Heart left ventricle (tissue), 16 donors: ENCODE measurements at regions of chr15 and their contacts with region 1.

Region 1: GRCh38 chr15:90419738-90420406 is 31.8 kb downstream of the IQGAP1 start:
- DNase-seq: no peak
- ATAC-seq: peak; percentile 37 to 69 (median 56)
- H3K4me3 ChIP-seq: peak overlapping the region in 1 of 12 donors; percentile 12
- H3K27ac ChIP-seq: peak overlapping the region in 10 of 12 donors; percentile 12 to 79 (median 33)
- H3K4me1 ChIP-seq: peaks cover 18 to 86% (median 71%) of the 10 kb centered on the region in 12 donors
- H3K27me3 ChIP-seq: no peaks in the 10 kb centered on the region
- CTCF ChIP-seq: no peak
- POLR2A ChIP-seq: no peak

Region 2: GRCh38 chr15:90362936-90363212 is 57.0 kb before region 1 on chr15:
- intact Hi-C with region 1: loop called in 1 of 10 experiments (anchors 10 kb)
- DNase-seq: no peak
- ATAC-seq: peak in 3 of 4 donors; percentile 41 to 78 (median 57)
- H3K4me3 ChIP-seq: no peak overlapping the region
- H3K27ac ChIP-seq: peak overlapping the region in 10 of 12 donors; percentile 45 to 88 (median 74)
- H3K4me1 ChIP-seq: peaks cover 0 to 48% (median 16%) of the 10 kb centered on the region in 12 donors
- H3K27me3 ChIP-seq: no peaks in the 10 kb centered on the region
- CTCF ChIP-seq: no peak
- POLR2A ChIP-seq: no peak

Region 3: DNA sequence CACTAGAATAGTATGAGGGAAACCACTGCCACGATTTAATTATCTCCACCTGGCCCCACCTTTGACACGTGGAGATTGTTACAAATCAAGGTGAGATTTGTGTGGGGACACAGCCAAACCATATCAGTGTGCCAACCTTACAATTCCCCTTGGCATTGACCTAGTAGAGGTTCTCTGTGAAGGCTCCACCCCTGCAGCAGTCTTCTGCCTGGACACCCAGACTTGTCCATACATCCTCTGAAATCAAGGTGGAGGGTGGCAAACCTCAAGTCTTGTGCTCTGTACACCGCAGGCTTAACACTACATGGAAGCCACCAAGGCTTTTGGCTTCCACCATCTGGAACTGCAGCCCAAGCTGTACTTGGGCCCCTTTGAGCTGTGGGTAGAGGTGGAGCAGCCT is 40.6 kb before region 1 on chr15:
- intact Hi-C with region 1: no loop called
- DNase-seq: no peak
- ATAC-seq: no peak
- H3K4me3 ChIP-seq: no peak overlapping the region
- H3K27ac ChIP-seq: no peak overlapping the region
- H3K4me1 ChIP-seq: peaks cover 0 to 20% (median 6%) of the 10 kb centered on the region in 12 donors
- H3K27me3 ChIP-seq: no peaks in the 10 kb centered on the region
- CTCF ChIP-seq: no peak
- POLR2A ChIP-seq: no peak

Region 4: GRCh38 chr15:90463381-90463780 is 43.5 kb after region 1 on chr15:
- intact Hi-C with region 1: loop called in 3 of 10 experiments (anchors 5 kb)
- DNase-seq: peak in 2 of 5 donors; percentile 43 to 54
- ATAC-seq: peak; percentile 88 to 95 (median 90)
- H3K4me3 ChIP-seq: peak overlapping the region in 1 of 12 donors; percentile 17
- H3K27ac ChIP-seq: peak overlapping the region; percentile 60 to 94 (median 84)
- H3K4me1 ChIP-seq: peaks cover 0 to 70% (median 58%) of the 10 kb centered on the region in 12 donors
- H3K27me3 ChIP-seq: no peaks in the 10 kb centered on the region
- CTCF ChIP-seq: peak in 7 of 12 donors; percentile 8 to 38 (median 24)
- POLR2A ChIP-seq: no peak

Region 5: DNA sequence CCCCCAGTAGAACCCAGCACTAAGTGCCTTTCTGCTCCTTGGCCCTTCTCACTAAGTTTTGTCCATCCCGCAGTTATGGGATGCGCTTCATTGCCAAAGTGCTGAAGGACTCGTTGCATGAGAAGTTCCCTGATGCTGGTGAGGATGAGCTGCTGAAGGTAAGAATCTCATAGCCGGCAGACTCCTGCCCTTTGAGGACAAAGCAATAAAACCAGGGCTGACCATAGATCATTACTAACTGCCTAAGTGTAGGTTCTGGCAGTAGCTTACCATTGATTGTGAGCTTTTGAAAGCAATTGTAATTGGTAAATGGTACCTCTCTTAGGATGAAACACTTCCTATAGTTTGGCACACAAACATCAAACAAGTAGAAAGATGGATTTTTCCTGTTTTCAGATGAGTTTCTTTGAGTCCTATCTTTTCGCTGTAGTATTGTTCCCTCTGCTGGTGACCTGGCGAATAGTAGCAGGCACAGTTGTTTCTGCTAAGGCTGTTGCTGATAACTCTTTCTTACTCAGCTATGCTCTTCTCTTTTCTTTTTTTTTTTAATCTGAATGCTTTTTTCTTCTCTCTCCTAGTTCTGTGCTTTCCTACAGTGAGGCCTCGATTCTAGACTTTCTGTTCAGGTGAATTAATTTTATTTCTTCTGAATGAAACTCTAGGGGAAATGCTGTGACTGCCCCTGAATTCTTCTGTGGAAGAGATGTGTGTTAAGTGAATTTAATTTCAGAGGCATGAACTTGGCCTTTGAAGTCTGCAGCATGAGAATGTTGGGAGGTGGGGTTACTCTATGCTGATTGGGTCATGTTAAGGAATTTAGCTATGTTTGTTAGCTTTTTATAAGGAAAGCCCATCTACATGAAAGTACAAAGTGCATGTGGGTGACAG is 62.5 kb after region 1 on chr15:
- intact Hi-C with region 1: no loop called
- DNase-seq: peak in 2 of 5 donors; percentile 23 to 40
- ATAC-seq: peak; percentile 47 to 68 (median 62)
- H3K4me3 ChIP-seq: no peak overlapping the region
- H3K27ac ChIP-seq: no peak overlapping the region
- H3K4me1 ChIP-seq: peaks cover 0 to 6% (median 0%) of the 10 kb centered on the region in 12 donors
- H3K27me3 ChIP-seq: no peaks in the 10 kb centered on the region
- CTCF ChIP-seq: peak; percentile 57 to 88 (median 72)
- POLR2A ChIP-seq: no peak

Region 6: GRCh38 chr15:90519688-90520087 is 99.8 kb after region 1 on chr15:
- intact Hi-C with region 1: no loop called
- DNase-seq: no peak
- ATAC-seq: no peak
- H3K4me3 ChIP-seq: no peak overlapping the region
- H3K27ac ChIP-seq: no peak overlapping the region
- H3K4me1 ChIP-seq: peaks cover 0 to 7% (median 0%) of the 10 kb centered on the region in 12 donors
- H3K27me3 ChIP-seq: no peaks in the 10 kb centered on the region
- CTCF ChIP-seq: no peak
- POLR2A ChIP-seq: no peak

Region 7: DNA sequence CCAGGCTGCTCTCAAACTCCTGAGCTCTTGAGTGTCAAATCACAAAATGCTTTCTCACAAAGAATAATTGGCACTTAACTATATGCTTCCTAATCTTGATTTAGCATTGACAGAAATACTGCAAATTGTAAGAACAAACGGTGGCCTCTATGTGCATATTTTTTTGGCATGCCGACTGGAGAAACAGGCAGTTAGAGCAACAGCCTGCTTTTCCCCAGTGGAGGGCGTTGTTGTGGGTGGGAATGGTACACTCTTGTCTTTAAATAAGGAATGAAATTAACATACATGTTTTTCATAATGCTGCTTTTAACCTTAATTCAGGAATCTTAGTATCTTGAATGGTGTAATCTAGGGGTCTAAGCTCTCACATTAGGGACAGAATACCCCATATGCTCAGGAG is 649.1 kb after region 1 on chr15:
- intact Hi-C with region 1: no loop called
- DNase-seq: no peak
- ATAC-seq: no peak
- H3K4me3 ChIP-seq: no peak overlapping the region
- H3K27ac ChIP-seq: no peak overlapping the region
- H3K4me1 ChIP-seq: no peaks in the 10 kb centered on the region
- H3K27me3 ChIP-seq: peaks cover 0 to 9% (median 0%) of the 10 kb centered on the region in 9 donors
- CTCF ChIP-seq: no peak
- POLR2A ChIP-seq: no peak